ENCODE measurements at regions of chr17 and their contacts with region 1.

Region 1: GRCh38 chr17:4215882-4216570 is 47.8 kb downstream of the ANKFY1 start:
- DNase-seq: no peak
- H3K4me3 ChIP-seq: no peak overlapping the region
- H3K4me3 Mint-ChIP-seq: no peak overlapping the region
- H3K27ac ChIP-seq: no peak overlapping the region
- H3K27ac Mint-ChIP-seq: peak overlapping the region in 3 of 8 donors; percentile 6 to 25 (median 18)
- H3K4me1 ChIP-seq: no peaks in the 10 kb centered on the region
- H3K4me1 Mint-ChIP-seq: peaks cover 7 to 11% (median 10%) of the 10 kb centered on the region in 3 donors
- H3K27me3 ChIP-seq: no peaks in the 10 kb centered on the region
- H3K27me3 Mint-ChIP-seq: no peaks in the 10 kb centered on the region

Region 2: GRCh38 chr17:4249452-4250029 is 33.5 kb after region 1 on chr17:
- CTCF ChIA-PET with region 1: interaction called, 12 read pairs
- POLR2A ChIA-PET with region 1: no interaction called
- DNase-seq: peak in 1 of 5 donors; percentile 4
- H3K4me3 ChIP-seq: no peak overlapping the region
- H3K4me3 Mint-ChIP-seq: no peak overlapping the region
- H3K27ac ChIP-seq: no peak overlapping the region
- H3K27ac Mint-ChIP-seq: peak overlapping the region in 6 of 8 donors; percentile 4 to 59 (median 32)
- H3K4me1 ChIP-seq: peaks cover 5% of the 10 kb centered on the region
- H3K4me1 Mint-ChIP-seq: peaks cover 48 to 76% (median 66%) of the 10 kb centered on the region in 3 donors
- H3K27me3 ChIP-seq: no peaks in the 10 kb centered on the region
- H3K27me3 Mint-ChIP-seq: no peaks in the 10 kb centered on the region

Region 3: DNA sequence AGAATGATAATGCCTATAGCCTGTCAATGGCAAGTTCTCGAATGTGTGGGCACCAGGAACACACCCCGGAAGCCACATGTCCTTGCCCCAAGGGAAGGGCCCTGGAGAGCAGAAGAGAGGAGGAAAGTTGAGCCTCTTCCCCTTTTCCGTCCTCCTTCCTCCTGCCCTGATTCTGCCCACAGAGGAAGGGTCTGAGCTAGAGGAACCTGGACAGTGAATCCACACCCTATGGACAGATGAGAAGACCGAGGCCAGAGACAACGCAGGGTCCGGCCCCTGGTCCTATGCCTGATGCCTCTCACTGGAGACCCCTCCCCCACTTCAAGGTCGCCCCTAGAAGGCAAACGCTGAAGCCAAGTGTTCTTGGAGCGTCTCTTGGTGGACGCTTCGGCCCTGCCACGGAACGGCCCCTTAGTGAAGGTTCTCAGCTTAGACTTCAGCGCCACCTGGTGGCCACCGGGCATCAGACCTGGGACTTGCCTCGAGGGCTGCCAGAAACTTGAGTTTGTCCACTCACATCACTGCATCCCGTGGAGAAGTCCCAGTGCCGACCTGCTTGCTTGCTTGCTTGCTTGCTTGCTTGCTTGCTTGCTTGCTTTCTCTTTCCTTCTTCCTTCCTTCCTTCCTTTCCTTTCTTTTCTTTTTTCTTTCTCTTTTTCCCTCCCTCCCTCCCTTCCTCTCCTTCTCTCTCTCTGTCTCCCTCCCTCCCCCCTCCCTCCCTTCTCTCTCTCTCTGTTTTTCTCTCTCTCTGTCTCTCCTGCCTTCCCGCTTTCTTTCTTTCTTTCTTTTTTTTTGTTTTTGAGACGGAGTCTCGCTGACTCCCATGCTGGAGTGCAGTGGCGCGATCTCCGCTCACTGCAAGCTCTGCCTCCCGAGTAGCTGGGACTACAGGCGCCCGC is 197.2 kb after region 1 on chr17:
- CTCF ChIA-PET with region 1: interaction called, 72 read pairs
- POLR2A ChIA-PET with region 1: interaction called, 3 read pairs
- DNase-seq: peak; percentile 74 to 92 (median 85)
- H3K4me3 ChIP-seq: peak overlapping the region; percentile 26
- H3K4me3 Mint-ChIP-seq: peak overlapping the region in 4 of 7 donors; percentile 48 to 85 (median 68)
- H3K27ac ChIP-seq: no peak overlapping the region
- H3K27ac Mint-ChIP-seq: peak overlapping the region in 2 of 8 donors; percentile 29 to 51
- H3K4me1 ChIP-seq: peaks cover 6% of the 10 kb centered on the region
- H3K4me1 Mint-ChIP-seq: peaks cover 4 to 6% (median 6%) of the 10 kb centered on the region in 3 donors
- H3K27me3 ChIP-seq: no peaks in the 10 kb centered on the region
- H3K27me3 Mint-ChIP-seq: no peaks in the 10 kb centered on the region

Measured in CD8-positive, alpha-beta memory T cell (primary cell).